ENCODE measurements at regions of chr2 and their contacts with region 1.

Region 1: DNA sequence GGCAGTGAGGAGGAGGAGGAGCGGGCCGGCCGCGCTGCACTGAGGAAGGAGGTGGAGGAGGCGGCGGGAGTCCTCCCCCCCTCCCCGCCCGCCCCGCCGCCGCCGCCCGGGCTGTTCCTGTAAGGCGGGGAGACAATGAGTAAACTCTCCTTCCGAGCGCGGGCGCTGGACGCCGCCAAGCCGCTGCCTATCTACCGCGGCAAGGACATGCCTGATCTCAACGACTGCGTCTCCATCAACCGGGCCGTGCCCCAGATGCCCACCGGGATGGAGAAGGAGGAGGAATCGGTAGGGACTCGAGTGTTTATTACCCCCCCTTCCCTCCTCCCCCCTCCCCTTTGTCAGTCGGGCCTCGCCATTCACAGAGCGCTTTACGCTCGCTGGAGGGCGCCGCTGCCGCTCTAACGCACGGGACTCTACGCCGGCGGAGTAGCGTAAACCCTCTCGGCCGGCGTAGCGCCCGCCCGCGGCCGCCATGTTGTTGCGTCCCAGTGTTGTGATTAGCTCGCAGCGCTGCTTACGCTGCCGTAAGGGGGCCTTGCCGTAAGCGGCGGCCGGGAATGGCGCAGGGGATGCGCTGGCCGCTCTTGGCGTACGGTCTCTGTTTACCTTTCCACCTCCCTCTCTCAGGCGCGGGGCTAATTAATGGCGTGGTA is 460 bp downstream of the EPC2 start:
- DNase-seq: peak; percentile 92 to 97 (median 95)
- H3K4me3 ChIP-seq: peak overlapping the region; percentile 86
- H3K27ac ChIP-seq: peak overlapping the region; percentile 99 to 100
- H3K4me1 ChIP-seq: peaks cover 4% of the 10 kb centered on the region
- H3K27me3 ChIP-seq: no peaks in the 10 kb centered on the region
- CTCF ChIP-seq: peak in 2 of 3 donors; percentile 40 to 66
- EP300 ChIP-seq: no peak
- POLR2A ChIP-seq: no peak

Region 2: GRCh38 chr2:147998203-147998602 is 646.8 kb before region 1 on chr2:
- intact Hi-C with region 1: no loop called
- DNase-seq: no peak
- H3K4me3 ChIP-seq: no peak overlapping the region
- H3K27ac ChIP-seq: no peak overlapping the region
- H3K4me1 ChIP-seq: peaks cover 4% of the 10 kb centered on the region
- H3K27me3 ChIP-seq: no peaks in the 10 kb centered on the region
- CTCF ChIP-seq: no peak
- EP300 ChIP-seq: no peak
- POLR2A ChIP-seq: no peak

Region 3: DNA sequence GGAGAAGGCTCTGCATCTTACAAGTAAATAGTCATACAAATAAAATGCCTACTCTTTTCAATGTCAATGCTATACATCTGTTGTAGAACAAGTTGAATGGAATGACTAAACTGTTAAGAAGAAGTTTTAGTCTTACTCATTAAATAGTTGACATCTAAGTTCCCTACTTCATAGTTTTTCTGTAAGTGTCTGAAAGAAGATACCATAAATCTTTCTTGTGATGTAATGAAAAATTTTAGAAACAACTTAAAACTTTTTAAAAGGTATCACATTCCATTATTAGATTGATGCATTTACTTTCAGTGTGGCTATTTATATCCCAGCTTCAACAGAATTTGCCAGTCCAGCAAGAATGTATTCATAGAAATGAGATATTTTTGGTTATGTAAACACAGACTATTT is 185.6 kb before region 1 on chr2:
- intact Hi-C with region 1: no loop called
- DNase-seq: no peak
- H3K4me3 ChIP-seq: no peak overlapping the region
- H3K27ac ChIP-seq: no peak overlapping the region
- H3K4me1 ChIP-seq: no peaks in the 10 kb centered on the region
- H3K27me3 ChIP-seq: no peaks in the 10 kb centered on the region
- CTCF ChIP-seq: no peak
- EP300 ChIP-seq: no peak
- POLR2A ChIP-seq: no peak

Region 4: DNA sequence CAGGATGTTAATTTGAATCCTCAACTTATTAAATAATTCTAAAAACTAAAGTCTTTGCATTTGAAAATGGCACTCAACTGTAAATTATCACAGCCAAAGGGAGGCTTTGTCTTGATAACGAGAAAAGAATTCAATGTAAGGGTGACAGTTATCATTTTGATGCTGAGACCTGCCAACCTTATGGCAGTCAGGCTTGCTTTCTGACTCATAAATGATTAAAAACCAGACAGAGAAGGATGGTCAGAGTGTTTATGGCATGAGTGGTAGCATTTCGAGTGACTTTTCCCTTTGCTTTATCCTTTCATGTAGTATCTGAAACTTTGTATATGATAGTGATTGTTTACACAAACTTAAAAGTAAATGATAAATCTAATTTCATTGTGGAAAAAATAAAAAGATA is 54.4 kb before region 1 on chr2:
- intact Hi-C with region 1: no loop called
- DNase-seq: no peak
- H3K4me3 ChIP-seq: no peak overlapping the region
- H3K27ac ChIP-seq: no peak overlapping the region
- H3K4me1 ChIP-seq: no peaks in the 10 kb centered on the region
- H3K27me3 ChIP-seq: no peaks in the 10 kb centered on the region
- CTCF ChIP-seq: no peak
- EP300 ChIP-seq: no peak
- POLR2A ChIP-seq: no peak

Region 5: GRCh38 chr2:148615381-148615841 is 29.6 kb before region 1 on chr2:
- intact Hi-C with region 1: no loop called
- DNase-seq: no peak
- H3K4me3 ChIP-seq: no peak overlapping the region
- H3K27ac ChIP-seq: no peak overlapping the region
- H3K4me1 ChIP-seq: peaks cover 5% of the 10 kb centered on the region
- H3K27me3 ChIP-seq: no peaks in the 10 kb centered on the region
- CTCF ChIP-seq: no peak
- EP300 ChIP-seq: no peak
- POLR2A ChIP-seq: no peak

Region 6: GRCh38 chr2:148813603-148814065 is 168.6 kb after region 1 on chr2:
- intact Hi-C with region 1: loop called in 1 of 4 experiments (anchors 10 kb)
- DNase-seq: peak in 1 of 5 donors; percentile 18
- H3K4me3 ChIP-seq: no peak overlapping the region
- H3K27ac ChIP-seq: no peak overlapping the region
- H3K4me1 ChIP-seq: peaks cover 9% of the 10 kb centered on the region
- H3K27me3 ChIP-seq: no peaks in the 10 kb centered on the region
- CTCF ChIP-seq: no peak
- EP300 ChIP-seq: no peak
- POLR2A ChIP-seq: no peak

Measured in ovary (tissue), 10 donors.